CD8-positive, alpha-beta T cell (primary cell): ENCODE measurements at regions of chr9 and their contacts with region 1.

Region 1: GRCh38 chr9:128881901-128882681 is at the starts of genes KYAT1 and LRRC8A:
- DNase-seq: peak; percentile 96 to 99 (median 98)
- ATAC-seq: peak; percentile 91
- H3K4me3 ChIP-seq: peak within 1 kb of the TSS; percentile 80 to 86
- H3K4me3 Mint-ChIP-seq: peak within 1 kb of the TSS; percentile 97
- H3K27ac ChIP-seq: peak within 1 kb of the TSS; percentile 76 to 91
- H3K27ac Mint-ChIP-seq: peak within 1 kb of the TSS; percentile 98
- H3K4me1 ChIP-seq: peaks cover 31% of the 10 kb centered on the region
- H3K4me1 Mint-ChIP-seq: peaks cover 51% of the 10 kb centered on the region
- H3K27me3 ChIP-seq: no peaks in the 10 kb centered on the region
- H3K27me3 Mint-ChIP-seq: no peaks in the 10 kb centered on the region
- CTCF ChIP-seq: no peak
- total RNA-seq, gene KYAT1: 2.4 to 3.0 TPM
- total RNA-seq, gene LRRC8A: 35.0 to 40.1 TPM

Region 2: GRCh38 chr9:128688512-128689292 is 193.4 kb before region 1 on chr9 and contains the start of gene SET:
- CTCF ChIA-PET with region 1: no interaction called
- POLR2A ChIA-PET with region 1: no interaction called
- intact Hi-C with region 1: loop called in 1 of 2 experiments (anchors 5 kb)
- DNase-seq: peak; percentile 81 to 97 (median 92)
- ATAC-seq: peak; percentile 78
- H3K4me3 ChIP-seq: peak within 1 kb of the TSS; percentile 68 to 90
- H3K4me3 Mint-ChIP-seq: peak within 1 kb of the TSS; percentile 90
- H3K27ac ChIP-seq: peak within 1 kb of the TSS; percentile 68 to 91
- H3K27ac Mint-ChIP-seq: peak within 1 kb of the TSS; percentile 96
- H3K4me1 ChIP-seq: peaks cover 64% of the 10 kb centered on the region
- H3K4me1 Mint-ChIP-seq: peaks cover 67% of the 10 kb centered on the region
- H3K27me3 ChIP-seq: no peaks in the 10 kb centered on the region
- H3K27me3 Mint-ChIP-seq: no peaks in the 10 kb centered on the region
- CTCF ChIP-seq: no peak
- total RNA-seq, gene SET: 243 to 260 TPM

Region 3: GRCh38 chr9:128786681-128787601 is 95.2 kb before region 1 on chr9 and contains the start of gene TBC1D13:
- CTCF ChIA-PET with region 1: no interaction called
- POLR2A ChIA-PET with region 1: no interaction called
- intact Hi-C with region 1: loop called (anchors 1 kb)
- DNase-seq: peak; percentile 86 to 95 (median 89)
- ATAC-seq: peak; percentile 90
- H3K4me3 ChIP-seq: peak within 1 kb of the TSS; percentile 96 to 98
- H3K4me3 Mint-ChIP-seq: peak within 1 kb of the TSS; percentile 94
- H3K27ac ChIP-seq: peak within 1 kb of the TSS; percentile 82 to 83
- H3K27ac Mint-ChIP-seq: peak within 1 kb of the TSS; percentile 96
- H3K4me1 ChIP-seq: peaks cover 20% of the 10 kb centered on the region
- H3K4me1 Mint-ChIP-seq: peaks cover 23% of the 10 kb centered on the region
- H3K27me3 ChIP-seq: no peaks in the 10 kb centered on the region
- H3K27me3 Mint-ChIP-seq: no peaks in the 10 kb centered on the region
- CTCF ChIP-seq: no peak
- total RNA-seq, gene TBC1D13: 30.7 to 35.0 TPM

Region 4: GRCh38 chr9:128902351-128903078 is 20.4 kb after region 1 on chr9:
- CTCF ChIA-PET with region 1: no interaction called
- POLR2A ChIA-PET with region 1: interaction called, 10 read pairs
- intact Hi-C with region 1: loop called (anchors 1 kb)
- DNase-seq: peak; percentile 71 to 95 (median 90)
- ATAC-seq: peak; percentile 93
- H3K4me3 ChIP-seq: peak overlapping the region; percentile 32 to 56
- H3K4me3 Mint-ChIP-seq: peak overlapping the region; percentile 81
- H3K27ac ChIP-seq: peak overlapping the region; percentile 87 to 92
- H3K27ac Mint-ChIP-seq: peak overlapping the region; percentile 91
- H3K4me1 ChIP-seq: peaks cover 69% of the 10 kb centered on the region
- H3K4me1 Mint-ChIP-seq: peaks cover 69% of the 10 kb centered on the region
- H3K27me3 ChIP-seq: no peaks in the 10 kb centered on the region
- H3K27me3 Mint-ChIP-seq: no peaks in the 10 kb centered on the region
- CTCF ChIP-seq: no peak

Region 5: GRCh38 chr9:129028192-129028957 is 146.3 kb after region 1 on chr9 and contains the start of gene SH3GLB2:
- CTCF ChIA-PET with region 1: no interaction called
- POLR2A ChIA-PET with region 1: interaction called, 4 read pairs
- intact Hi-C with region 1: loop called in 1 of 2 experiments (anchors 2 kb)
- DNase-seq: peak; percentile 88 to 97 (median 94)
- ATAC-seq: peak; percentile 92
- H3K4me3 ChIP-seq: peak within 1 kb of the TSS; percentile 51 to 61
- H3K4me3 Mint-ChIP-seq: peak within 1 kb of the TSS; percentile 83
- H3K27ac ChIP-seq: peak within 1 kb of the TSS; percentile 40 to 62
- H3K27ac Mint-ChIP-seq: peak within 1 kb of the TSS; percentile 64
- H3K4me1 ChIP-seq: peaks cover 13% of the 10 kb centered on the region
- H3K4me1 Mint-ChIP-seq: peaks cover 24% of the 10 kb centered on the region
- H3K27me3 ChIP-seq: no peaks in the 10 kb centered on the region
- H3K27me3 Mint-ChIP-seq: no peaks in the 10 kb centered on the region
- CTCF ChIP-seq: no peak
- total RNA-seq, gene SH3GLB2: 64.9 to 68.3 TPM

Region 6: GRCh38 chr9:129202613-129203555 is 320.8 kb after region 1 on chr9:
- CTCF ChIA-PET with region 1: no interaction called
- POLR2A ChIA-PET with region 1: no interaction called
- intact Hi-C with region 1: loop called in 1 of 2 experiments (anchors 5 kb)
- DNase-seq: peak; percentile 84 to 96 (median 90)
- ATAC-seq: peak; percentile 93
- H3K4me3 ChIP-seq: peak overlapping the region; percentile 56 to 95
- H3K4me3 Mint-ChIP-seq: peak overlapping the region; percentile 78
- H3K27ac ChIP-seq: peak overlapping the region; percentile 62 to 65
- H3K27ac Mint-ChIP-seq: peak overlapping the region; percentile 79
- H3K4me1 ChIP-seq: peaks cover 30% of the 10 kb centered on the region
- H3K4me1 Mint-ChIP-seq: peaks cover 28% of the 10 kb centered on the region
- H3K27me3 ChIP-seq: no peaks in the 10 kb centered on the region
- H3K27me3 Mint-ChIP-seq: no peaks in the 10 kb centered on the region
- CTCF ChIP-seq: no peak